BJ (cell line): ENCODE measurements at regions of chr3 and their contacts with region 1.

Region 1: GRCh38 chr3:134754768-134755559 is 40.1 kb upstream of the EPHB1 start:
- DNase-seq: no peak
- H3K4me3 ChIP-seq: no peak overlapping the region
- H3K27me3 ChIP-seq: 0 out of 2 replicates have a peak, but pooled peaks cover 2% of the 10 kb centered on the region
- CTCF ChIP-seq: peak; percentile 86

Region 2: GRCh38 chr3:134527038-134527437 is 227.9 kb before region 1 on chr3:
- CTCF ChIA-PET with region 1: no interaction called
- POLR2A ChIA-PET with region 1: no interaction called
- DNase-seq: no peak
- H3K4me3 ChIP-seq: no peak overlapping the region
- H3K27me3 ChIP-seq: no peaks in the 10 kb centered on the region
- CTCF ChIP-seq: 0 out of 2 replicates have a peak, but pooled peaks have one; percentile 21

Region 3: GRCh38 chr3:134769287-134769868 is 14.4 kb after region 1 on chr3:
- CTCF ChIA-PET with region 1: interaction called, 37 read pairs
- POLR2A ChIA-PET with region 1: no interaction called
- DNase-seq: no peak
- H3K4me3 ChIP-seq: no peak overlapping the region
- H3K27me3 ChIP-seq: peaks cover 1% of the 10 kb centered on the region
- CTCF ChIP-seq: no peak